ENCODE measurements at regions of chr15 and their contacts with region 1.

Region 1: GRCh38 chr15:81480645-81481053 is 106.6 kb upstream of the TMC3 start:
- DNase-seq: peak; percentile 70
- H3K4me3 ChIP-seq: no peak overlapping the region
- H3K27ac ChIP-seq: no peak overlapping the region
- H3K4me1 ChIP-seq: no peaks in the 10 kb centered on the region
- CTCF ChIP-seq: peak; percentile 98

Region 2: DNA sequence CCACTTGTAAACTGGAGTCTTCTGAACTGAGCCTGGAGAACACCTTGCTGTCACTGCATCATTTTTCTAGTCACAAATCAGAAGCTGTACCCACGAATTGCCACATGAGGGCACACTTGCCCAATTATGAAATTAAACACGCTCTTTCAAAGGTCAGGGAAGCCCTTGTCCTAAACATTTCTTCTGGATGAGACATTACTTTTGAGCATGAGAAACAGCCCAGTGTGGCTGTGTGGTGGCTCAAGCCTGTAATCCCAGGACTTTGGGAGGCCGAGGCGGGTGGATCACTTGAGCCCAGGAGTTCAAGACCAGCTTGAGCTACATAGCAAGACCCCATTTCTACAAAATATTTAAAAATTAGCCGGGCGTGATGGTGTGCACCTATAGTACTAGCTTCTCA is 374.1 kb before region 1 on chr15:
- CTCF ChIA-PET with region 1: no interaction called
- POLR2A ChIA-PET with region 1: no interaction called
- intact Hi-C with region 1: no loop called
- DNase-seq: peak; percentile 54
- H3K4me3 ChIP-seq: no peak overlapping the region
- H3K27ac ChIP-seq: no peak overlapping the region
- H3K4me1 ChIP-seq: no peaks in the 10 kb centered on the region
- CTCF ChIP-seq: peak; percentile 85

Region 3: DNA sequence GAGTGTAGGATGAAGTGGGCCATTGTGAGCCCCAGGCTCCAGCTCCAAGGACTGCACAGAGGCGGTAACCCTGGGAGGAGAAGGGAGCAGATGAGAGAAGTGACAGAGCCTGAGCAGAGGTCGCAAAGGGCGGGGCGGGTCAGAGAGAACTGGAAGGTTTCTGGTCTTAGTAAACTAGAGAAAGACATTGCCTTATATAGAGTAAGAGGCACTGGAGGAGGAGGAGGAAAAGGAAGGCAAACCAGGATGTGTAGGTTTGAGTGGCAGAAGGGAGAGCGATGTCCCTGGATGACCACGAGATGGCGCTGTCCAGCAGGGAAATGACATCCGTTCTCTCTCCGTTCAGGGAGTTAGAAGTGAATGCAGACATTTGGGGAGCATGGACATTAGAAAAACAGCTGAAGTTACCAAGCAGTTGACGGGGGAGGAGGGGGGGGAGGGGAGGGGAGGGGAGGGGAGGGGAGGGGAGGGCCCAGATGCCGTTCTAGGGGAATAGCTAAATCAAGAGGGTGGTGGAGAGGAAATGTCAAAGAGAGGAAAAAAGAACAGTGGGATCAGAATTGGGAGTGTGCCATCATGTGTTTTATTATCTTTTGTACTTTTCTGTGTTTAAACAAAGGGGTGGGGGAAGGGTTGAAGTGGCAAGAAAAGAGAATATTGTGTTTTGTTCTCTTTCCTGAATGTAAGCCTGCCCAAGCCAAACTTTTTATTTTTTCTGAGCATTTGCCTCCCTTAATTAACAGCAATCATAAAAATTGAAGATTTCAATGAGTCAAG is 205.5 kb before region 1 on chr15:
- CTCF ChIA-PET with region 1: no interaction called
- POLR2A ChIA-PET with region 1: no interaction called
- intact Hi-C with region 1: loop called (anchors 2 kb)
- DNase-seq: peak; percentile 89
- H3K4me3 ChIP-seq: no peak overlapping the region
- H3K27ac ChIP-seq: no peak overlapping the region
- H3K4me1 ChIP-seq: peaks cover 10% of the 10 kb centered on the region
- CTCF ChIP-seq: peak; percentile 84

Region 4: GRCh38 chr15:81296673-81297072 is 184.0 kb before region 1 on chr15:
- CTCF ChIA-PET with region 1: no interaction called
- POLR2A ChIA-PET with region 1: no interaction called
- intact Hi-C with region 1: no loop called
- DNase-seq: peak; percentile 94
- H3K4me3 ChIP-seq: peak overlapping the region; percentile 92
- H3K27ac ChIP-seq: peak overlapping the region; percentile 98
- H3K4me1 ChIP-seq: peaks cover 73% of the 10 kb centered on the region
- CTCF ChIP-seq: no peak

Region 5: DNA sequence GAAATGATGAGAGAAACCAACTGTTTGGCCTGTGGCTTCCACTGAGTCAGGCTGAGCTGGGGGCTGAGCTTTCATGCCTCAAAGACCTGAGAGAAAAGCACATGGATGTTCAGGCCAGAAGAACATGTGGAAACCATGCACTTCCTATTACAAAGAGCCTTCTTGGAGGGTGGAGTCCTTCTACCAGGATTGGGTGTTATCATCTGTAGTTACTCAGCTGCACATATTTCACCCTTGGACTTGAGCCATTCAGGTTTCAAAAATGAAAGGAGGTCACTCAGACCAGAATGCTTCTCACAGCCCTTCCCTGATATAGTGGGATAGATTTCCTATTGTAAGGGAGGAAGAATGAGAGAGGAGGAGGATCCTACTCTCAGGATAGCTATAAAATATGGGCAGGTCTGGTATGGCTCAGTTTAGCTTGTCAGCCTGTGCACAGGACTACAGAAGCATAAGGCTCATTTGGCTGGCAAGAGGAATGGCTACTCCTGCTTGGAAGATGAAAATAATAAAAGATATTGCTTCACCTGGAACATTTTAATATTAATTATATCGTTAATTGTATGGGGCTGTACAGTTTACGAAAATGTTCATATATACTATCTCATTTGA is 67.0 kb after region 1 on chr15:
- CTCF ChIA-PET with region 1: no interaction called
- POLR2A ChIA-PET with region 1: no interaction called
- intact Hi-C with region 1: no loop called
- DNase-seq: no peak
- H3K4me3 ChIP-seq: no peak overlapping the region
- H3K27ac ChIP-seq: no peak overlapping the region
- H3K4me1 ChIP-seq: no peaks in the 10 kb centered on the region
- CTCF ChIP-seq: no peak

Region 6: DNA sequence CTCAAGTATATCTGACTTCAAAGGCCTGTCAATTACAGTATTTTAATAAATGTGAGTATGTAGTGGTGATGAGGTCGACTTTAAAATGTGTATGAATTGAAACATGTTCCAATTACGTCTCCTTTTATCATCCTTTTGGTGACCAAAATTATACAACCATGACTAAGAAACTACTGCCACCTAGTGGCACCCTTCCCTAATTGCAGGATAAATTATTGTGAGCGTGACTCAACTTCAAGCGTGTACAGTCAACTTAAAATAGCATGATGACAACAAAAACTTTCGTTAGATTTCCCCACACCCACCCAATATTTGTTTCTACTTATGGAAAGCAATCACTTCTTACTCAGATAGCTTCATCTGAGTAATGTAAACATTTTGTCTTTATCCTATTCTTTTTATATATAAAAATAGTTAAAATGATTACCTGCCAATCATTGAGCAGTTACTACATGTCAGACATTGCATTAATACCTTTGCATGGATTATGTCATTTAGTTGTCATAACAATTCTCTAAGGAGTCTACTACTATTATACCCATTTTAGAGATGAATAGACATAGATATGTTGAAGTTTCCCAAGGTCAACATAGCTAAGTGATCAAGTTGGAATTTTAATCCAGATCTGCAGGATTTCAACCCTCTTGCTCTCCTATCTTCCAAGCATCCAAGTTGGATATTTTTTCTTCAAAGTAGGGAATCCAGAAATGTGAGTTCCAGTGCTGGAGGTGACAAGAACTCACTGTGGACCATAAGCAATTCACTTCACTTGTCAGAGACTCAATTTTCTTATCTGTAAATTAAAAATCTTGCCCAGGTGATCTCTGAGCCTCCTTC is 459.2 kb after region 1 on chr15:
- CTCF ChIA-PET with region 1: no interaction called
- POLR2A ChIA-PET with region 1: no interaction called
- intact Hi-C with region 1: loop called (anchors 1 kb)
- DNase-seq: peak; percentile 67
- H3K4me3 ChIP-seq: no peak overlapping the region
- H3K27ac ChIP-seq: no peak overlapping the region
- H3K4me1 ChIP-seq: no peaks in the 10 kb centered on the region
- CTCF ChIP-seq: peak; percentile 98

Region 7: DNA sequence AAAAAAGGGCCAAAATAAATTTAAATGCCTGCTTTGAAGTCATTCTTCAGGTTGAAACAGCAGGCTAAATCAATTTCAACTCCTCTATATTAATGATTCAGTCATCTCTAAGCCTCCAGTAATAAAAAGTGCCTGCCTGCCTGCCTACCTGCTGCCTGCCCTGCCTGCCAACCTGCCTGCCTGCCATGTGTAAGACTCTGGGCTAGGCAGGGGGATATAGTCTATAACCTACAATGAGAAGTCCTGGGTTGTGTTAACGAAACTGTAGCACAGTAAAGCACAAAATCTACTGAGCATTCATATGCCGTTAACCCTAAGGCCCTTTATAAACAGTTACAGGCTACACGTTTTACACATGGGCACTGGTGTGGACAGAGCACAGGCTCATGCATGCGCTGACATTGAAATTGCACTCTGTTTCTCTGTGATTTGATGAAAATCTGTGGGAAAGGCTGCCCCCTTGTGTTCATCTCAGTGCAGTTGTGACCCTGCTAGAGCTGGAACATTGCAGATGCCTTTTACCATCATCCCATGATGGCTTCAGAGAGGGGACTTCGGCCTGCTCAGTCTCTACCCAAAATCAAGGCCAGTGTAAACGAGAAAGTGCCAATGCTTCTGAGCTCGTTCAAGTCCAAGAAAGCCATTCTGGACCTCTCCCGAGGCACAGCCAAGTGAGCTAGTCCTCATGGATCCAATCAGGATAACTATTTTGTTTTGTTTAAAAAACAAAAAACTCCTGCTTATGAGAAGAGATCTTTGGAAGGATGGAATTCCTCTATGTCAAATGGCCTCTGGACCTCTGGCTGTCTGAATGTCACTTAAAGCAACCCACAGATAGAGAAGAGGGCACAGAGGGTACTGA is 717.3 kb after region 1 on chr15:
- CTCF ChIA-PET with region 1: no interaction called
- POLR2A ChIA-PET with region 1: no interaction called
- intact Hi-C with region 1: loop called (anchors 2 kb)
- DNase-seq: peak; percentile 71
- H3K4me3 ChIP-seq: no peak overlapping the region
- H3K27ac ChIP-seq: no peak overlapping the region
- H3K4me1 ChIP-seq: no peaks in the 10 kb centered on the region
- CTCF ChIP-seq: peak; percentile 82